ENCODE measurements at regions of chr13 and their contacts with region 1.

Region 1: GRCh38 chr13:36261976-36262375 is 35.6 kb downstream of the CCDC169 start:
- DNase-seq: no peak
- H3K4me3 ChIP-seq: no peak overlapping the region
- H3K27ac ChIP-seq: no peak overlapping the region
- H3K4me1 ChIP-seq: no peaks in the 10 kb centered on the region
- H3K27me3 ChIP-seq: no peaks in the 10 kb centered on the region
- CTCF ChIP-seq: no peak

Region 2: GRCh38 chr13:36193151-36193855 is 68.7 kb before region 1 on chr13:
- CTCF ChIA-PET with region 1: no interaction called
- dilution Hi-C with region 1: loop called (anchors 5 kb)
- in situ Hi-C with region 1: no loop called
- intact Hi-C with region 1: no loop called
- DNase-seq: peak; percentile 71
- H3K4me3 ChIP-seq: no peak overlapping the region
- H3K27ac ChIP-seq: peak overlapping the region; percentile 74
- H3K4me1 ChIP-seq: peaks cover 8% of the 10 kb centered on the region
- H3K27me3 ChIP-seq: no peaks in the 10 kb centered on the region
- CTCF ChIP-seq: no peak

Region 3: DNA sequence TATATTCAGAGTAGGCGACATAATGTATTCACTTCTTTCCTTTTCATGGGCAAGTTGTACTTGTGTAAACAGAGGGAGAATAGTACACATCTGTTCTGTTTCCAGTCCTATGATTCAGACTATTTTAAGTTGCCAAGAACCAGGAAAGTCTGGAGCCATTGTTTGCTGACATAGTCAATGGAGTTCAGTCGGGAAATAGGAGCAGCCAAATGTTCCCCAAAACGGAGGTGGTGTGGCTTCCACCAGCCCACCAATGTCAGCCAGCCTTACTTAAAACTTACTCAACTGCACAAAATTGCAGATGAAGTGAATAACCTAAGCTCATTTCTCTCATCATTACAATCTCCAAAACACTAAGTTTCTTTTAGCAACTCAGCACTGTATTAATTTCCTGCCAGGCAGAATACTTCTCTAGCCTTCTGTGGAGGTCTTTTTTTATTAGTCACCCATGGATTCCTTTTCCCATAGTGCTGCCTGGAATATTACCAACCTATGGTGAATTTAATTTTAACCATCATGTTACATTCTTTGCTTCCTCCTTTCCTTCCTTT is 865.8 kb after region 1 on chr13:
- CTCF ChIA-PET with region 1: no interaction called
- dilution Hi-C with region 1: no loop called
- in situ Hi-C with region 1: no loop called
- intact Hi-C with region 1: no loop called
- DNase-seq: no peak
- H3K4me3 ChIP-seq: no peak overlapping the region
- H3K27ac ChIP-seq: no peak overlapping the region
- H3K4me1 ChIP-seq: no peaks in the 10 kb centered on the region
- H3K27me3 ChIP-seq: no peaks in the 10 kb centered on the region
- CTCF ChIP-seq: no peak